Ovary (tissue), 10 donors: ENCODE measurements at regions of chr2 and their contacts with region 1.

Region 1: DNA sequence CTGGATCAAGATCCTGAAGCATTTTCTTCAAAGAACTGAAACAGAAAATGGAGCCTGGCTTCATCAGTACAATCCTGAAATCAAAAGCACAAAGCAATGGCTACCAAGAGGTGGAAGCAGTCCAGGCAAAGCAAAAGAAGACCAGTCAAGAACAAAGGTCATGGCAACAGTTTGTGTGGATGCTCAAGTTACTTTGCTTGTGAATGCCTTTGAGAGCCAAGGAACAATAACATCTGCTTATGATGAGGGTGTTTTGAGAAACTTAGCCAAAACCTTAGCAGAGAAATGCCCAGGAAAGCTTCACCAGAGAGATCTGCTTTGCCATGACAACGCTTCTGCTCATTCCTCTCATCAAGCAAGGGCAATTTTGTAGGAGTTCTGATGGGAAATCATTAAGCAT is 723.1 kb downstream of the TMEM182 start:
- DNase-seq: no peak
- H3K4me3 ChIP-seq: no peak overlapping the region
- H3K27ac ChIP-seq: no peak overlapping the region
- H3K4me1 ChIP-seq: no peaks in the 10 kb centered on the region
- H3K27me3 ChIP-seq: no peaks in the 10 kb centered on the region
- CTCF ChIP-seq: no peak
- EP300 ChIP-seq: no peak
- POLR2A ChIP-seq: no peak

Region 2: DNA sequence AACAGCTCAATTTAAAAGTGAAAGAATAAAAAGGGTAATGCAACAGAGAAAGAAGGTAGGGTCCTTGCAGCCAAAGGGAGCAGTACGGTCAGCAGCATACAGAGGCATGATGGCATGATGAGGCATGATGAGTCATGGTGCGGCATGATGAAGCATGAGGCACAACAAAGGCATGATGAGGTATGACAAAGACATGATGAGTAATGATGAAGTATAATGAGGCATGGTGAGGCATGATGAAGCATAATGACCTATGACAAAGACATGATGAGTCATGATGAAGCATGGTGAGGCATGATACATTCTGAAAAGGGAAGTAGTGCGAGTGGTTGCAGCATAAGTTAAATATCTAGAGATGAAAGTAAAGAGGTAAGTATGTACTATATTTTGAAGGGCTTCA is 49.9 kb before region 1 on chr2:
- intact Hi-C with region 1: no loop called
- DNase-seq: no peak
- H3K4me3 ChIP-seq: no peak overlapping the region
- H3K27ac ChIP-seq: no peak overlapping the region
- H3K4me1 ChIP-seq: no peaks in the 10 kb centered on the region
- H3K27me3 ChIP-seq: no peaks in the 10 kb centered on the region
- CTCF ChIP-seq: no peak
- EP300 ChIP-seq: no peak
- POLR2A ChIP-seq: no peak

Region 3: DNA sequence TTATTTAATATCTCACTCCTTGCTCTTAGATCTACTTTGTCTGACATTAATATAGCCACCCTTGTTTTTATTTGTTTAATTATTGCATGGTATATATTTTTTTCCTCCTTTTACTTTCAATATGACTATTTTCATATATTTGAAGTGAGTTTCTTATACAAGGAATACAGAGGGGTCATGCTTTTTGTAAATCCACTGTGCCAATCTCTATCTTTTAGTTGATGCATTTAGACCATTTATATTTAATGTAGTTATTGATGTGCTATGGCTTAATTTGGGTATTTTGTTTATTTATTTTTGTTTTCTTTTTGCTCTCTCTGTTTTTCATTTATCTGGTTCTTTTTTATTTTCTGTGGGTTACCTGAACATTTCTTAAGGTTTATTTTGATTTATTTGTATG is 27.5 kb after region 1 on chr2:
- intact Hi-C with region 1: no loop called
- DNase-seq: no peak
- H3K4me3 ChIP-seq: no peak overlapping the region
- H3K27ac ChIP-seq: no peak overlapping the region
- H3K4me1 ChIP-seq: no peaks in the 10 kb centered on the region
- H3K27me3 ChIP-seq: no peaks in the 10 kb centered on the region
- CTCF ChIP-seq: no peak
- EP300 ChIP-seq: no peak
- POLR2A ChIP-seq: no peak

Region 4: DNA sequence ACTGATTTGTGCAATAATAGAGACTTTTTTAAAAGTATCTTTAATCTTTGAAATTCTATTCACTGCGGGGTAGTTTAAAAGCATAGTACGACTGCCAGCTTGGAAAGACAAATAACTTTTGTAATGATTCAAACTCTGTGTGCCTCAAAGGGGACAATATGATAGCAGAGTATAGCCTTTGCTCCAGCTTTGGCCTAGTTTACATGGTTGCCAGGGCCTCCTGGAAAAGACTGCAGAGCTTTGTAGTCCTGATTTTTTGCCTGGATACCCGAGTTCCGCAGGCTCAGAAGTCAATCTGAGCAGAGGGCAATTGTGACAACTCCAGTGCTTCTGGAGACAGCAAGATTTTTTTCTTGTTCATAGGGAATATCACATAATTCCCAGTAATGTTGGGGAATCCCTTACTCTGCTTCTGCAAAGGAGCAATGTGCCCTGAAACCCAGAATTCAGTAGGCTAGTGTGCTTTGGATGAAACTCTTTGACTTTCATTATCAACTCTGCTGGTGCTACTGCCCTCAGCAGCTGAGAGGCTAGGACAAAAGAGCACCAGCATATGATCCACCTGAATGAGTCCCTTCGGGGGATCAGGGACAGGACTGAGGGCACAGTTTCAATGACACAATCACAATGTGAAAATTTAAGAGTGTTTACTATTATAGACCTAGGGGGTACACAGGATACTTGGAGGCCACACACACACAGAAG is 45.0 kb after region 1 on chr2:
- intact Hi-C with region 1: loop called in 1 of 4 experiments (anchors 10 kb)
- DNase-seq: no peak
- H3K4me3 ChIP-seq: no peak overlapping the region
- H3K27ac ChIP-seq: no peak overlapping the region
- H3K4me1 ChIP-seq: no peaks in the 10 kb centered on the region
- H3K27me3 ChIP-seq: no peaks in the 10 kb centered on the region
- CTCF ChIP-seq: no peak
- EP300 ChIP-seq: no peak
- POLR2A ChIP-seq: no peak

Region 5: DNA sequence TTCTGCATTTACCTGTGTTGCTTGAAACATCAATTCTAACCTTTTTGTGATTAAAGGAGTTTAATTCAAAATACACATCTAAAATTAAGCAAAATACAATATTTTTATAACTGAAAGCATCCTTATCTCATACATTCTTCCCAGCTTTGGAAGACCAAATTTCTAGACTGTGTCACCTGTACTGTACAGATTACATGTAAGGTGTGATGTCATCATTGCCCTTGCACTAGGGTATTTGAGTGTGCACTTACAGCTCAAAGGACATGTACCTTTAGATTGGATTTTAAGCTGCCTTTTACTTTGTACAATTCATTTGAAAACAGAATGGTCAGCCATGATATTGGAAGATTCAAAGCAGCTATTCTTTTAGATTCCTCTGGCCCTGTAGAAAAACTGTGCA is 436.3 kb after region 1 on chr2:
- intact Hi-C with region 1: no loop called
- DNase-seq: no peak
- H3K4me3 ChIP-seq: no peak overlapping the region
- H3K27ac ChIP-seq: no peak overlapping the region
- H3K4me1 ChIP-seq: no peaks in the 10 kb centered on the region
- H3K27me3 ChIP-seq: no peaks in the 10 kb centered on the region
- CTCF ChIP-seq: no peak
- EP300 ChIP-seq: no peak
- POLR2A ChIP-seq: no peak

Region 6: DNA sequence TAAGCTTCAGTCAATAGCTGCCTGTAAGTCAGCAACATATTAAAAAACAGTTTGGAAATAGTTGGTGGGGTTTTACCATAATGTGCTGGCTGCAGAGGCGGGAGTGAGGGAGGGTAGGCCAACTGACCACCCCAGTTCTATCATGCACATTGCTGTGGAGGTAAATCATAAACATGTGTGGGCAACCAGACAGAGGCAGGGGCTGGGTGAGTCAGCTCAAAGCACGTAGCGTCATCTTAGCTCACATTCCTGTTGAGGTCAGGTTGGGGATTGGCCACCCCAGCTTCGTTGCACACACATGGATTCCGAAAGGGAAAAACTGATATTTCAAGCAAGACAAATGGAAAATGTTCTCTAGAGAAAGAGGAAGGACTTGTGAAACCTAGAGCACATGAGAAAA is 1776.2 kb after region 1 on chr2:
- intact Hi-C with region 1: no loop called
- DNase-seq: no peak
- H3K4me3 ChIP-seq: no peak overlapping the region
- H3K27ac ChIP-seq: no peak overlapping the region
- H3K4me1 ChIP-seq: peaks cover 2% of the 10 kb centered on the region
- H3K27me3 ChIP-seq: no peaks in the 10 kb centered on the region
- CTCF ChIP-seq: no peak
- EP300 ChIP-seq: no peak
- POLR2A ChIP-seq: no peak